ENCODE measurements at regions of chr14 and their contacts with region 1.

Region 1: GRCh38 chr14:105605084-105605820 is 78.9 kb downstream of the TMEM121 start:
- H3K4me3 Mint-ChIP-seq: no peak overlapping the region
- H3K27ac Mint-ChIP-seq: no peak overlapping the region
- H3K4me1 Mint-ChIP-seq: peaks cover 8% of the 10 kb centered on the region
- H3K27me3 Mint-ChIP-seq: no peaks in the 10 kb centered on the region

Region 2: DNA sequence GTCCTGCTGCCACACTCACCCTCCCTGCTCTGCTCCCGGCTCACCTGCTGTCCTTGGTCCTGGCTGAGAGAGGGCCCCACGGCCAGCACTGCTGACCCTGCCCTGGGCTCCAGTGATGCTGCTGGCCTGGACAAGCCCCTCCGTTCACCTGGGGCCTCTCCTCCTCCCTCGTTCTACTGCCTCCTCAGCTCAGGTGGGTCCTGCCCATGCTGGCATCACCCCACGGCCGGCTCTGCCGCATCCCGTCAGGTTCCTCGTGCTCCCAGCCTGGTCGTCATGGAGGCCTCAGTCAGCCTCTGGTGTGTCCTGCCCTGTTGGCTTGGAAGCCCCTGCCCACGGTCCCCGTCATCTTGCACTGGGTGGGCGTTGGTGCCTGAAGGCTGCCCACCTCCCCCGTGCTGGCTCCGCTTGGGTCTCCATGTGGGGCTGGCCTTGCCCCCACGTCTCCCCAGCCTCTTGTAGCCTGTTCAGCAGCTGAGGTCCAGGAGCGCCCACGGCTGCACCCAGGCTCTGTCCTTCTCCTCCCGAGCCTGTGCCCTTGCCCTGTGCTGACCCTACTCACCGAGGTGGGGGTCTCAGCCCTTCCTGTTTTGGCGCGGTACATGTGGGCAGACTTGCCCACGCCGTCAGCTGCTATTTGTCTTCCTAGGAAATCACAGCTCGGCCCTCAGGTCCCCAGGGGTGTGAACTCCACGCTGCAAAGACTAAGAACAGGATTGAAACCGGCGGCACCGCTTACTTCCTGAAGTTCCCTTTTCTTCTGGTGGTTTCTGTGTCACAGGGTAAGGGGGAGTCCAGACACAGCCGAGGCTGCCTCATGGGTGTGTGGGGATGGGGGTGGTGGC is 42.7 kb after region 1 on chr14:
- intact Hi-C with region 1: loop called (anchors 5 kb)
- H3K4me3 Mint-ChIP-seq: no peak overlapping the region
- H3K27ac Mint-ChIP-seq: no peak overlapping the region
- H3K4me1 Mint-ChIP-seq: peaks cover 7% of the 10 kb centered on the region
- H3K27me3 Mint-ChIP-seq: no peaks in the 10 kb centered on the region

Measured in dendritic cell treated with granulocyte-macrophage colony-stimulating factor and Interleukin-4, amounts not matched to agents 40 ng/mL and 50 ng/mL, for 4 days (primary cell).